ENCODE measurements at regions of chr17 and their contacts with region 1.

Region 1: GRCh38 chr17:68613739-68614298 is 12.7 kb upstream of the FAM20A start:
- DNase-seq: peak in 1 of 9 donors; percentile 32
- ATAC-seq: peak; percentile 46
- H3K4me3 ChIP-seq: no peak overlapping the region
- H3K4me3 Mint-ChIP-seq: no peak overlapping the region
- H3K27ac ChIP-seq: no peak overlapping the region
- H3K27ac Mint-ChIP-seq: no peak overlapping the region
- H3K4me1 ChIP-seq: no peaks in the 10 kb centered on the region
- H3K4me1 Mint-ChIP-seq: no peaks in the 10 kb centered on the region
- H3K27me3 ChIP-seq: peaks cover 0 to 3% of the 10 kb centered on the region in 2 donors
- H3K27me3 Mint-ChIP-seq: peaks cover 21 to 49% (median 41%) of the 10 kb centered on the region in 5 donors

Region 2: DNA sequence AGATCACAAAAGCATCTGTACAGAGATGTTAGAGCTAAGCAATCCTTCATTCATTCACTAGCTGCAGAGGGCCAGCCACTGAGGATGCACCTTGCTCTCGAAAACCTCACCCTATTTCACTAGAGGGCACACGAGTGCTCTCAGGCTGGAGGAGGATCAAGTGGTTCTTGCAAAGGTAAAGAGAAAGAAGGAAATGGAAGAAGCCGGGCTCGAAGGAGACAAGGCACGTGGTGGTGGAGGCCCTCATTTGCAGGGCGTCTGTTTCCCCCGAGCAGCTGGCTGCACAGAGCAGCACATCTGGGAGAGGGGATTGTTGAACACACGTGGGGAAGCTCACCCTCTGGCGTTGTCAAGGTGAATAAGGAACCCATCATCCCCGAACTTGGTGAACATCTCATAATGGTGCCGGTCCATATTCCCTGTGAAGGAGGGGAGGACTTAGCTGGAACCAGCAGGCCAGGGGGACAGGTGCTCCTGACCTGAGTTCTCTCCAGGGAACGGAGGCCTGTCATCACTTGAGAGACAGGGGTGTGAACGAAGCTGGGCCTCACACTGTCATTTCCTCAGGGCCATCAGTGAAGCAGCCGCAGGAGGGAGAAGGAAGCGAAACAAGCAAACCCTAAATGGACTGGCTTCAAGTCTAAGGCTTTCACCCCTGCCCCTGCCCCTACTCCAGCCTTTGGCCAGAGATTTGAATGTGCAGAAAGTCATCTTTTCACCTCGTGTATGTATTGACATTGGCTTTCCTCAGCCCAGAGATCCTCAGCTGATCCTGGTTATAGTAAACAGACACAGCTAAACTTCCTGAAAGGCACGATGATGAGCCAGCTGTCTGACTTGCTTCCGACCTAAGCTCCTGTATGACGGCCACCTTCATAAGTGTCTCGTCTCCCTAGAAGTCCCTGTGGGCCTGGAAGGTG is 74.0 kb before region 1 on chr17:
- CTCF ChIA-PET with region 1: no interaction called
- POLR2A ChIA-PET with region 1: no interaction called
- intact Hi-C with region 1: loop called in 1 of 2 experiments (anchors 10 kb)
- DNase-seq: no peak
- ATAC-seq: peak; percentile 37
- H3K4me3 ChIP-seq: no peak overlapping the region
- H3K4me3 Mint-ChIP-seq: no peak overlapping the region
- H3K27ac ChIP-seq: no peak overlapping the region
- H3K27ac Mint-ChIP-seq: peak overlapping the region in 5 of 9 donors; percentile 48 to 78 (median 54)
- H3K4me1 ChIP-seq: no peaks in the 10 kb centered on the region
- H3K4me1 Mint-ChIP-seq: peaks cover 0 to 9% (median 4%) of the 10 kb centered on the region in 7 donors
- H3K27me3 ChIP-seq: no peaks in the 10 kb centered on the region
- H3K27me3 Mint-ChIP-seq: no peaks in the 10 kb centered on the region